ENCODE measurements at regions of chr10 and their contacts with region 1.

Region 1: DNA sequence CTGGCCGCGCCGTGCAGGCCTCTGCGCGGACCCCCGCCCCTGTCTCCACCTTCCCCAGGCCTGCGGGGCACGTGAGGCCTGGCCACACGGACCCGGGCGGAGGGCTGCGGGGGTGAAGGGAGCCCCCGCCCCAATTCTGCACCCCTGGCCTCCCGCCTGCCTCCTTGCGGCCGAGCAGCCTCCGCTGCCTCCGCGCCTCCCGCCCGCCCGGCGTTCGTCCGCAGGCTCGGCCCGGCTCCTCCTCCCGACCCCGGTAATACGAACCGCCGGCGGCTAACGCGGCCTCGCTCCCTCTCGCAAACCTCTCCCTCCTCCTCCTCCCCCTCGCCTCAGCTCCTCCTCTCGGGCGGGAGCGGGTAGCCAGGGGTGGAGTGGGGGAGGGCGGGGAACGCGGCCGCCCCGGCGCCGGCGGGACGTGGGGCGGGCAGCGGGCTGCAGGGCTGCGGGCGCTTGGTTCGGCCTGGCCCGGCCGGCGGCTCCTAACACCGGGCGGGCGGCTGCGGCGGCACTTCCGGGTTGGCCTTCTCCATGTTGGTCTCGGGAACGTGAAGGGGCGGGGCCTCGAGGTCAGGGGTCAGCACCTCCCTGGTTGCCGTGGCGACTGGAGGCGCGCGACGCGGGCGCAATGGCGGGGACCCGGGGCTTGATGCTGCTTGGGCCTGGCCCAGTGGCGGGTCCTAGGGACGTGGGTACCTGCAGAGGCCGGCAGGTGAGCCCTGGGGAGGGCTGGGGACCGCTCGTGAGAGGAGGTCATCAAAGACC is at the start of gene RAB11FIP2:
- DNase-seq: peak; percentile 98
- H3K4me3 ChIP-seq: peak within 1 kb of the TSS; percentile 86 to 96 (median 90)
- H3K27ac ChIP-seq: peak within 1 kb of the TSS; percentile 96 to 97 (median 97)
- H3K4me1 ChIP-seq: peaks cover 0 to 46% (median 40%) of the 10 kb centered on the region in 4 donors
- H3K27me3 ChIP-seq: no peaks in the 10 kb centered on the region
- CTCF ChIP-seq: no peak
- EP300 ChIP-seq: no peak
- POLR2A ChIP-seq: no peak
- total RNA-seq, gene RAB11FIP2: 40.3 to 166 (median 46.9) TPM

Region 2: DNA sequence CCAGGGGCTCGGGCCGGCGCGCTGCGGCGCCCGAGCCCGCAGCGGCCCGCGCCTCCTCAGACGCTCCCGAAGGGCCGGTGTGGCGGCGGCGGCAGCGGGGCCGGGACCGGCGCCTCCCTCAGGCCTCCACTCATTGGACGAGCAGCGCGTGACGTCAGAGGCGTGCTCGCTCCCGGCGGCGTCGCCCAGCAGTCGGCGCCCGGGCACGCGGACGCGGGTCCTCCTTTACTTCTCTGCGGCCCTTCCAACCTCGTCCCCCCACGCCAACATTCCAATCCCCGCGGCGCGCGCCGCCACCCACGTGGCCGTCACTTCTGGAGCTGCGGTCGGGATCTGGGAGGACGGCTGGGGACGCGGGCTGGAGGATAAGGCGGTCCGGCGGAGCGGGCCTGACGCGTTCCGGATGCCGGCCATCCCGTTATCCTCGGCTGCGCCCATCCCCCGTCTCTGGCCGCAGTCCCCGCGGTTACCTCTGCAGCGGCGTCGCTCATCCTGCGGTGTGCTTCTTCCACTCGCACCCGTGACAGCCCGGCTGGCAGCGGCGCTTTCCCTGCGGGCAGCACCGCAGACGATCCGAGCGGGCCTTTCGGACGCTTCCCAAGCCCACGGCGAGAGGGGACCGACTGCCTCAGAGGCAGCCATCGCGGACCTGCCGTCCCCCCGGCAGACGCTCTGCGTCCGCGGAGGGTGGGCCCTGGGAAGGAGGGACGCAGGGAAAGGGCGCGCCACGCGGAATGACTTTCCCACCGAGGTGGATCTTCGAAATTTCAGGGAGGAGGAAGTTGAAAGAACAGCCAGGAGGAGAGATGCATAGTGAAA is 671.0 kb before region 1 on chr10 and contains the start of gene PDZD8:
- intact Hi-C with region 1: loop called (anchors 5 kb)
- DNase-seq: peak; percentile 97
- H3K4me3 ChIP-seq: peak within 1 kb of the TSS; percentile 69 to 94 (median 85)
- H3K27ac ChIP-seq: peak within 1 kb of the TSS; percentile 89 to 99 (median 96)
- H3K4me1 ChIP-seq: peaks cover 0 to 51% (median 27%) of the 10 kb centered on the region in 4 donors
- H3K27me3 ChIP-seq: no peaks in the 10 kb centered on the region
- CTCF ChIP-seq: no peak
- EP300 ChIP-seq: peak in 1 of 4 donors; percentile 10
- POLR2A ChIP-seq: peak; percentile 80 to 81
- total RNA-seq, gene PDZD8: 25.2 to 34.3 (median 30.7) TPM

Region 3: DNA sequence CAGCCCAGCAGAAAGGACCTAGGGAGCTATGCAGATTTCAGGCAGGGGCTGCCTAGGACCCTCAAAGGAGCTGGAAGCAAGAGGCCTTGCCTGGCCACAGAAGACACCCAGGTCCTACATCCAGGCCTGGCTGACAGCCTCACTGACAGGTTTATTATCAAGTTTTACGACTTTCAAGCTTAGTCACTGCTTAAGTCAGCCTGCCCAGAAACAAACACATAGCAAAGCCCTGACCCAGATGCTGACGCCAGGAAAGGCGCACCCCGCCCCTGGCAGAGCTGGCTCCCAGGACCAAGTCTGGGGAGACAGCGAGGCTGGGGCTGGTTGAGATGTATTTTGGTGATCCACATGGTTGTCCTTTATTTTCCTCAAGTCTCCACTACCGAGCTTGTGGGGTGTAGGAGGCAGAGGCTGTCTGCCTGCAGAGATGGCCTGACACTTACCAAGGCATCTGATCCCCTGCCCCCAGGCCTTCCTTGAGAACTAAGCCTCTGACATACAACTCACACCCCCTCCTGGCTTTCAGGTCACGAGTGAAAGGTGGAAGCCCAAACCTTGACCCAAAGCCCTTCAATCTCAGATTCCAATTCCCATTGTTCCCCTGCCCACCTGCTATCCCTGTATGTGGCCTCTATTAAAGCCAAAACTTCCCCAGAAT is 584.7 kb before region 1 on chr10:
- intact Hi-C with region 1: loop called (anchors 10 kb)
- DNase-seq: peak; percentile 95
- H3K4me3 ChIP-seq: no peak overlapping the region
- H3K27ac ChIP-seq: peak overlapping the region in 3 of 4 donors; percentile 85 to 94 (median 93)
- H3K4me1 ChIP-seq: peaks cover 0 to 52% (median 47%) of the 10 kb centered on the region in 4 donors
- H3K27me3 ChIP-seq: no peaks in the 10 kb centered on the region
- CTCF ChIP-seq: no peak
- EP300 ChIP-seq: peak in 3 of 4 donors; percentile 89 to 94 (median 90)
- POLR2A ChIP-seq: no peak

Region 4: GRCh38 chr10:117537436-117537903 is 509.1 kb before region 1 on chr10:
- intact Hi-C with region 1: loop called (anchors 10 kb)
- DNase-seq: no peak
- H3K4me3 ChIP-seq: peak overlapping the region in 1 of 4 donors; percentile 16
- H3K27ac ChIP-seq: no peak overlapping the region
- H3K4me1 ChIP-seq: peaks cover 0 to 53% (median 43%) of the 10 kb centered on the region in 4 donors
- H3K27me3 ChIP-seq: peaks cover 67 to 100% (median 97%) of the 10 kb centered on the region in 3 donors
- CTCF ChIP-seq: peak in 2 of 4 experiments; percentile 9 to 77
- EP300 ChIP-seq: no peak
- POLR2A ChIP-seq: no peak

Region 5: DNA sequence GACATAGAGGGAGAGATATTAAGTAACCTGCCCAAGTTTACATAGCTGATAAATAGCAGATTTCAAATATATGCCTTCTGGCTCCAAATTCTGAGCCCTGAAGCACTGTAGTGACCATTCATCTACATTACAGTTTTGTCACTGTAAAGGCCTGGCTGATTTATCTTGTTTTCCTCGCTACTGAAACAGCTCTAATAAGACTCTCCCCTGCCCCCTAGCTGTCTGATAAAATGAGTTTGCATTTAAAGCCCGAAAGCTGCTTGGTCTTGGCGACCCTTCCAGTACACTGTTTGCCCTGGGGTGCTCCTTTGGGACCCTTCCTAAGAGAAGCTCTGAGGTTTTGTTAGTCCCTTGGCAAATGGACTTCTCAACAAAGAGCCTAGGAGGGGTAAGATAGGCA is 59.9 kb after region 1 on chr10:
- intact Hi-C with region 1: loop called (anchors 5 kb)
- DNase-seq: no peak
- H3K4me3 ChIP-seq: no peak overlapping the region
- H3K27ac ChIP-seq: no peak overlapping the region
- H3K4me1 ChIP-seq: no peaks in the 10 kb centered on the region
- H3K27me3 ChIP-seq: no peaks in the 10 kb centered on the region
- CTCF ChIP-seq: no peak
- EP300 ChIP-seq: no peak
- POLR2A ChIP-seq: no peak

Region 6: DNA sequence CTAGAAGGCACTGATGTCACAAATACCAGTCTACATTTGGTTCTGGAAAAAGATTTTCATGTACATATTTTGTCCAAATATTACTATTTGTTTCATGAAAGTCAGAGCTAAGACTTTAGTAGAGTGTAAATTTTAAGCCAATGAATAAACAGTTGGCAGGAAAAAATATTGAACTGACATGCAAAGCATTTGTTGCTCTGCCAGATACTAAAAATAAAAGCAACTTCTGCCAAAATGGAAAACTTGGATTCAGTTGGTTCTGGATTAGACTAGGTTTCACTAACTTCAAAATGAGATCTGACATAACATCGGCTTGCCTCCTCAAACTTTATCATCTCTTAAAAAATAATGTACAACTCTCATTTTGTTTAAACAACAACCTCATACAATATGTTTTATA is 260.6 kb after region 1 on chr10:
- intact Hi-C with region 1: no loop called
- DNase-seq: no peak
- H3K4me3 ChIP-seq: no peak overlapping the region
- H3K27ac ChIP-seq: peak overlapping the region in 1 of 4 donors; percentile 49
- H3K4me1 ChIP-seq: peaks cover 0 to 46% (median 33%) of the 10 kb centered on the region in 4 donors
- H3K27me3 ChIP-seq: no peaks in the 10 kb centered on the region
- CTCF ChIP-seq: no peak
- EP300 ChIP-seq: no peak
- POLR2A ChIP-seq: no peak

Region 7: DNA sequence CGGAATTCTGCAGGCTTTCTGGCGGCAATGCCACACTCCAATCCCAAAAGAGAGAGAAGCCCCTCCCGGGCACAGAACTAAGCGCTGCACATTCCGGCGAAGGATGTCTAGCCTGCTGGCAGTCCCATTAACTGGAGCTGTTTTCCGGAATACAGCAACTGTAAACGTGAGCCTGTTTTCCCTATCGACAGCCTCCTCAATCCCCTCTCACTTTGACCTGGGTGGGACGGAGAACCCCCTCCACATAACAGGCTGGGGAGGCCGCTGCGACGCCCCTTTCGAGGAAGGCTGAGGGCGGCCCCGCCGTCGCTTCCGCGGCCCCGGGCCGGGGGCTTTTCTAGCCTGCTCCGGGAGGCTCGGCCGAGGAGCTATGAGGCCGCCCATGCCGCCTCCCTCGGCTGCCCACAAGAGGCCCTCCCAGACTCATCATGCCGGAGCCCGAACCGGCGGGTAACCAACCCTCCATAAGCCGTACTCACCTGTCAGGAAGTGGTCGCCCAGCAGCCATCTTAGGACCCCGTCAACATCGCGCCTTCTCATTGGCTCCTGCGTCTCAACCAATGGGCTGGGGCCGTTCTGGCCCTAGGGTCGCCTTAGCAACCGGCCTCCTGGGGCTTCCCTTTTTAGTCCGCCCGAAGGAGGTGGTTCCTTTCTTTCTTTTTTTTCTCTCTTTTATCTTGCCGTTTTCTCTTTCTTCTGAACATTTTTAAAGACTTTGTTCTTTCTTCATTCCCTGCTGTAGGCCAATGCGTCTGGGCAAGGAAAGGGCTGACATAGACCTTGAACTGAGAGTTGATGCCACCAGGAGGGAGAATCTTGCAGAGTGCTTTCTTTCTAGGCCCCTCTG is 295.4 kb after region 1 on chr10 and contains the start of gene FAM204A:
- intact Hi-C with region 1: loop called (anchors 10 kb)
- DNase-seq: peak; percentile 96
- H3K4me3 ChIP-seq: peak within 1 kb of the TSS; percentile 86 to 98 (median 92)
- H3K27ac ChIP-seq: peak within 1 kb of the TSS; percentile 78 to 84 (median 80)
- H3K4me1 ChIP-seq: peaks cover 0 to 24% (median 15%) of the 10 kb centered on the region in 4 donors
- H3K27me3 ChIP-seq: no peaks in the 10 kb centered on the region
- CTCF ChIP-seq: no peak
- EP300 ChIP-seq: no peak
- POLR2A ChIP-seq: peak in 1 of 2 donors; percentile 31
- total RNA-seq, gene FAM204A: 45.1 to 83.1 (median 73.7) TPM

Region 8: GRCh38 chr10:118584181-118584954 is 537.8 kb after region 1 on chr10:
- intact Hi-C with region 1: no loop called
- DNase-seq: no peak
- H3K4me3 ChIP-seq: no peak overlapping the region
- H3K27ac ChIP-seq: peak overlapping the region in 2 of 4 donors; percentile 35 to 41
- H3K4me1 ChIP-seq: peaks cover 0 to 7% (median 2%) of the 10 kb centered on the region in 4 donors
- H3K27me3 ChIP-seq: no peaks in the 10 kb centered on the region
- CTCF ChIP-seq: no peak
- EP300 ChIP-seq: no peak
- POLR2A ChIP-seq: no peak

Region 9: GRCh38 chr10:118720685-118721538 is 674.3 kb after region 1 on chr10:
- intact Hi-C with region 1: loop called (anchors 10 kb)
- DNase-seq: no peak
- H3K4me3 ChIP-seq: no peak overlapping the region
- H3K27ac ChIP-seq: no peak overlapping the region
- H3K4me1 ChIP-seq: peaks cover 0 to 26% (median 21%) of the 10 kb centered on the region in 4 donors
- H3K27me3 ChIP-seq: no peaks in the 10 kb centered on the region
- CTCF ChIP-seq: peak; percentile 63 to 87 (median 83)
- EP300 ChIP-seq: no peak
- POLR2A ChIP-seq: no peak